ENCODE measurements at regions of chr7 and their contacts with region 1.

Region 1: GRCh38 chr7:74094224-74095101 is 10.9 kb downstream of the LIMK1 start:
- DNase-seq: peak; percentile 87 to 94 (median 91)
- H3K4me3 ChIP-seq: peak overlapping the region; percentile 67 to 87 (median 81)
- H3K4me3 Mint-ChIP-seq: peak overlapping the region; percentile 89 to 96
- H3K27ac ChIP-seq: peak overlapping the region; percentile 75 to 95
- H3K27ac Mint-ChIP-seq: peak overlapping the region; percentile 93 to 97 (median 95)
- H3K4me1 ChIP-seq: peaks cover 29 to 36% of the 10 kb centered on the region in 2 donors
- H3K4me1 Mint-ChIP-seq: peaks cover 23% of the 10 kb centered on the region
- H3K27me3 ChIP-seq: no peaks in the 10 kb centered on the region
- H3K27me3 Mint-ChIP-seq: no peaks in the 10 kb centered on the region
- CTCF ChIP-seq: no peak

Region 2: DNA sequence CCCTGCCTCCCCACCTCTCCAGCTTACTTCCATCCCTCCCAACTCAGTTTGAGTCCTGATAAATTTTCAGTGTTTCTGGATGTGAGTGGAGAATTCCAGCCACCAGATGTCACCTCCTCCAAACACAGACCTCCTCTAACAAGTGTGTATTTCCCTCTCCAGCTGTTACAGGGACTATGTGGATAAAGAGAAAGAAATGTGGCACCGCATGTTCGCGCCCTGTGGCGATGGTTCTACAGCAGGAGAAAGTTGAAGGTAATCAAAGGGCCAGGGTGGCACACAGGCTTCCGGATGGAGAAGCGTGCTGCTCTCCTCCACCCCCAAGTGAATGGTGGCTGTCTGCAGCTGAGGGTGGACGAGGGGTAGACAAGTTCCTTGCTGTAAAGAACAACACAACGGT is 751.8 kb before region 1 on chr7:
- intact Hi-C with region 1: no loop called
- DNase-seq: no peak
- H3K4me3 ChIP-seq: no peak overlapping the region
- H3K4me3 Mint-ChIP-seq: peak overlapping the region in 1 of 2 donors; percentile 39
- H3K27ac ChIP-seq: no peak overlapping the region
- H3K27ac Mint-ChIP-seq: peak overlapping the region in 1 of 7 donors; percentile 79
- H3K4me1 ChIP-seq: peaks cover 7 to 8% of the 10 kb centered on the region in 2 donors
- H3K4me1 Mint-ChIP-seq: peaks cover 14% of the 10 kb centered on the region
- H3K27me3 ChIP-seq: no peaks in the 10 kb centered on the region
- H3K27me3 Mint-ChIP-seq: peaks cover 10 to 24% (median 11%) of the 10 kb centered on the region in 3 donors
- CTCF ChIP-seq: no peak

Region 3: DNA sequence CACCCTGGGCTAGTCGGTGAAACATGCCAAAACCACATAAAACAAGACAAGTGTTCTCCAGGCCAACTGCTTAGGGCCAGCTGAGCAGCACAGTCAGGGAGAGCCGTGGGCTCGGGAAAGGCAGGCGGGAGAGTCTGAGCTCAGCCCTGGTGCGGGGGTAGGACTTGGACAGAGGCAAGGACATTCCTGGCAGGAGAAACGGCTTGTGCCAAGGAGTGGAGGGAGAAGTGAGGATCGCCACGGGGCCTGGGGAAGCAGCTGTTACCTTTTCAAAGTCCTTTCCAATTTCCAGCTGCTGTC is 62.3 kb before region 1 on chr7:
- intact Hi-C with region 1: no loop called
- DNase-seq: no peak
- H3K4me3 ChIP-seq: no peak overlapping the region
- H3K4me3 Mint-ChIP-seq: peak overlapping the region in 1 of 2 donors; percentile 8
- H3K27ac ChIP-seq: no peak overlapping the region
- H3K27ac Mint-ChIP-seq: no peak overlapping the region
- H3K4me1 ChIP-seq: peaks cover 2 to 10% of the 10 kb centered on the region in 2 donors
- H3K4me1 Mint-ChIP-seq: peaks cover 6% of the 10 kb centered on the region
- H3K27me3 ChIP-seq: peaks cover 23 to 43% of the 10 kb centered on the region in 2 donors
- H3K27me3 Mint-ChIP-seq: peaks cover 44 to 61% (median 45%) of the 10 kb centered on the region in 3 donors
- CTCF ChIP-seq: no peak

Region 4: DNA sequence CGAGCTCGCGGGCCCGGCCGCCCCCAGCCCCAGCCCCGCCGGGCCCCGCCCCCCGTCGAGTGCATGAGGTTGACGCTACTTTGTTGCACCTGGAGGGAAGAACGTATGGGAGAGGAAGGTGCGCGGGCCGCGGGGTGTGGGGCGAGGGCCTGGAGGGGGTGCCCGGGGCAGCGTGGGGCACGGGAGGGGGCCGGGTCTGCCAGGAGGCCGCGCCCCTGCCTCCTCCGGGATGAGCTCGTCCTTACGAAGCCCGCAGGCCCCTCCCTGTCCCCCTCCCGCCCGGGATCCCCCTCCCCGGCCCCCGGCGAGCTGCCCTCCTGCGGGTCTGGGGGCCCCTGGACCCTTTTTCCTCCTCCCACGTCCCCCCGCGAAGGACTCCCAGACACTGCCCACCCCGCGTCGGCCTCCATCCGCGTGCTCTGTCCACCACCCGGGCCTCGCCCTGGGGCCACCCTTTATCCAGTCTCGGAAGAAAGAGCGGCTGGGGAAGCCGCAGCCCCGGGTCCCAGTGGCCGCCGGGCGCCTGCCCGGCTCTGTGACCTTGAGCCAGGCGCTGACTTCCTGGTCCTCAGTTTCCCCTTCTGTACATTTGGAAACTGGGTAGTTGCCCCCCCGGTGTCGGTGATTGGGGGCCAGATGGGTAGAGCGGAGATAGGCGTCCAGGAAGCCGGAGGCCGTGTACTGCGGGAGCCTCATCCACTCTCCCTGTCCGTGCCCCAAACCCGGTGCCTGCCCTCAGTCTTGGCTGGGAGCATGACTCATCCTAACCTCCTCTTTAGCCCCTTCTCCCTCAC is 10.3 kb before region 1 on chr7:
- intact Hi-C with region 1: loop called in 1 of 2 experiments (anchors 1 kb)
- DNase-seq: peak; percentile 40 to 75 (median 67)
- H3K4me3 ChIP-seq: peak overlapping the region; percentile 42 to 76 (median 43)
- H3K4me3 Mint-ChIP-seq: peak overlapping the region; percentile 85 to 90
- H3K27ac ChIP-seq: peak overlapping the region in 1 of 2 donors; percentile 45
- H3K27ac Mint-ChIP-seq: peak overlapping the region in 5 of 7 donors; percentile 8 to 76 (median 54)
- H3K4me1 ChIP-seq: peaks cover 13 to 18% of the 10 kb centered on the region in 2 donors
- H3K4me1 Mint-ChIP-seq: peaks cover 11% of the 10 kb centered on the region
- H3K27me3 ChIP-seq: no peaks in the 10 kb centered on the region
- H3K27me3 Mint-ChIP-seq: peaks cover 0 to 3% (median 2%) of the 10 kb centered on the region in 3 donors
- CTCF ChIP-seq: no peak

Region 5: GRCh38 chr7:74173866-74174605 is 79.6 kb after region 1 on chr7 and contains the start of gene EIF4H:
- intact Hi-C with region 1: loop called in 1 of 2 experiments (anchors 5 kb)
- DNase-seq: peak; percentile 93 to 96 (median 96)
- H3K4me3 ChIP-seq: peak within 1 kb of the TSS; percentile 65 to 88 (median 74)
- H3K4me3 Mint-ChIP-seq: peak within 1 kb of the TSS; percentile 83 to 89
- H3K27ac ChIP-seq: peak within 1 kb of the TSS; percentile 79 to 91
- H3K27ac Mint-ChIP-seq: peak within 1 kb of the TSS; percentile 83 to 97 (median 93)
- H3K4me1 ChIP-seq: peaks cover 45 to 60% of the 10 kb centered on the region in 2 donors
- H3K4me1 Mint-ChIP-seq: peaks cover 50% of the 10 kb centered on the region
- H3K27me3 ChIP-seq: no peaks in the 10 kb centered on the region
- H3K27me3 Mint-ChIP-seq: peaks cover 0 to 2% (median 0%) of the 10 kb centered on the region in 3 donors
- CTCF ChIP-seq: no peak
- polyA plus RNA-seq, gene EIF4H: 162 to 234 (median 206) TPM